ENCODE measurements at regions of chr2 and their contacts with region 1.

Region 1: DNA sequence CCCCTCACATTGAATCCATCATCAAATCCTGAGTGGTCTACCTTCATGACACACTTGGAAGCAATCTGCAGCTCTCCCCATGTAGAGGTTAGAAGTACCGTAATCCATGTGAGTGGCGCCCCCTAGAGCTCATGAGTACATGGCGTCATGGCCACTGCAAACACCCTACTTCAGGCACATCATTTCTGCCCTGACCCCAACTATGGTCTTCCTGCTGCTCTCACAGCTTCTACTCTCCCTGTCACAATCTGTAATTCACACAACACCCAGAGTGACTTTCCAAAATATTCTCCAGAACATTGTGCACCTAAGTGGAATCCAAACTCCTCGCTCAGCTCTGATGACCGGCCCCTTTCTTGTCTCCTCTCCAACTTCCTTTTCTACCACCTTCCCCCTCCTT is 141.9 kb downstream of the ANKRD44 start:
- DNase-seq: peak; percentile 51
- ATAC-seq: peak; percentile 79
- H3K4me3 ChIP-seq: no peak overlapping the region
- H3K27ac ChIP-seq: no peak overlapping the region
- H3K4me1 ChIP-seq: no peaks in the 10 kb centered on the region
- H3K27me3 ChIP-seq: no peaks in the 10 kb centered on the region
- CTCF ChIP-seq: peak; percentile 64
- POLR2A ChIP-seq: no peak
- RAD21 ChIP-seq: peak; percentile 69

Region 2: GRCh38 chr2:197011799-197012641 is 156.7 kb before region 1 on chr2:
- CTCF ChIA-PET with region 1: no interaction called
- POLR2A ChIA-PET with region 1: no interaction called
- dilution Hi-C with region 1: no loop called
- in situ Hi-C with region 1: no loop called
- intact Hi-C with region 1: loop called (anchors 1 kb)
- DNase-seq: peak; percentile 53
- ATAC-seq: peak; percentile 74
- H3K4me3 ChIP-seq: no peak overlapping the region
- H3K27ac ChIP-seq: no peak overlapping the region
- H3K4me1 ChIP-seq: no peaks in the 10 kb centered on the region
- H3K27me3 ChIP-seq: no peaks in the 10 kb centered on the region
- CTCF ChIP-seq: peak; percentile 74
- POLR2A ChIP-seq: no peak
- RAD21 ChIP-seq: peak; percentile 76

Region 3: DNA sequence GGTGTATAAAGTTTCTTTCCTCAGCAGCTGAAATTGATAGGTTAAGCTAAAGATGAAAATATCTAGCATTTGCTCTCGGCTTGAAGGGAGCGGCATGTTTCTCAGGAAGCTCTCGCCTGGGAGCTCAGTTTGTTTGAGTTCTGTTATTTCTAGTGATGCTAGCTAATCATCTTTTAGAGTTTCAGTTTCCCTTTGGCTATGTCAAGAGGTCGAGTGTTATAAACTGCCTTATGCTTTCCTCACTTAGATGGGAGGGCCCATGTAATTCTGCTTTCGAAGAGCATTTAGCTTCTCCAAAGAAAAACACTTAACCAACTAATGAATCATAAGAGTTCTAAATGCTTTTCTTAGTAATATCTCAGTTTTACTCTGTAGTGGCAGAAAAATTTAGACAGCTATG is 669.3 kb after region 1 on chr2:
- CTCF ChIA-PET with region 1: no interaction called
- POLR2A ChIA-PET with region 1: no interaction called
- dilution Hi-C with region 1: no loop called
- in situ Hi-C with region 1: no loop called
- intact Hi-C with region 1: no loop called
- DNase-seq: peak; percentile 36
- ATAC-seq: peak; percentile 77
- H3K4me3 ChIP-seq: peak overlapping the region; percentile 35; the same call in 1 of the 2 replicates
- H3K27ac ChIP-seq: no peak overlapping the region
- H3K4me1 ChIP-seq: 0 out of 2 replicates have a peak, but pooled peaks cover 2% of the 10 kb centered on the region
- H3K27me3 ChIP-seq: no peaks in the 10 kb centered on the region
- CTCF ChIP-seq: no peak
- POLR2A ChIP-seq: no peak
- RAD21 ChIP-seq: no peak